ENCODE measurements at regions of chr1 and their contacts with region 1.

Region 1: DNA sequence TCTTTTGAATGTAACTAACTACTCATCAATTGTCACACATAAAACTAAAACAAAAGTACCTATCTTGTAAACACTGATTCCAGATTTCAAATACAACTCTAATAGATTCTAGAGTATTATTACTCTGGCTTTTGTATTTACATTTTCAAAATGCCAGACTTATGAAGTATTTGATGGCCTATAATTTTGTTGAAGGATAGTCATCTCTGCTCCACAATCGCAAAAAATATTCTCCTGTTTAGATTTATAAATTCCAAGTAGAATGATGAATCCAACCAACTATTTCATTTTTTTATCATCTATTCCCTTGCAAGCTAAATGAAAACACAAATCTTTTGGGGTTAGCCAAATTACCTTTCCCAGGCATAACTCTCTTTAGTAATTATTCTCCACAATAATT is 75.0 kb upstream of the GUCA2A start:
- DNase-seq: no peak
- CTCF ChIP-seq: no peak

Region 2: GRCh38 chr1:42250164-42250563 is 10.6 kb after region 1 on chr1:
- CTCF ChIA-PET with region 1: no interaction called
- POLR2A ChIA-PET with region 1: interaction called, 14 read pairs
- DNase-seq: no peak
- CTCF ChIP-seq: no peak

Measured in GM10248 (cell line).